H1 (cell line): ENCODE measurements at regions of chr19 and their contacts with region 1.

Region 1: GRCh38 chr19:50628146-50628545 is 11.5 kb downstream of the SYT3 start:
- DNase-seq: no peak
- H3K4me3 ChIP-seq: no peak overlapping the region
- H3K27ac ChIP-seq: no peak overlapping the region
- H3K4me1 ChIP-seq: 0 out of 7 replicates have a peak, but pooled peaks cover 0 to 4% (median 0%) of the 10 kb centered on the region in 4 experiments
- H3K27me3 ChIP-seq: no peaks in the 10 kb centered on the region
- CTCF ChIP-seq: peak in 1 of 3 experiments; percentile 8; a peak in 1 of 4 replicates
- EP300 ChIP-seq: no peak
- POLR2A ChIP-seq: no peak
- RAD21 ChIP-seq: no peak

Region 2: DNA sequence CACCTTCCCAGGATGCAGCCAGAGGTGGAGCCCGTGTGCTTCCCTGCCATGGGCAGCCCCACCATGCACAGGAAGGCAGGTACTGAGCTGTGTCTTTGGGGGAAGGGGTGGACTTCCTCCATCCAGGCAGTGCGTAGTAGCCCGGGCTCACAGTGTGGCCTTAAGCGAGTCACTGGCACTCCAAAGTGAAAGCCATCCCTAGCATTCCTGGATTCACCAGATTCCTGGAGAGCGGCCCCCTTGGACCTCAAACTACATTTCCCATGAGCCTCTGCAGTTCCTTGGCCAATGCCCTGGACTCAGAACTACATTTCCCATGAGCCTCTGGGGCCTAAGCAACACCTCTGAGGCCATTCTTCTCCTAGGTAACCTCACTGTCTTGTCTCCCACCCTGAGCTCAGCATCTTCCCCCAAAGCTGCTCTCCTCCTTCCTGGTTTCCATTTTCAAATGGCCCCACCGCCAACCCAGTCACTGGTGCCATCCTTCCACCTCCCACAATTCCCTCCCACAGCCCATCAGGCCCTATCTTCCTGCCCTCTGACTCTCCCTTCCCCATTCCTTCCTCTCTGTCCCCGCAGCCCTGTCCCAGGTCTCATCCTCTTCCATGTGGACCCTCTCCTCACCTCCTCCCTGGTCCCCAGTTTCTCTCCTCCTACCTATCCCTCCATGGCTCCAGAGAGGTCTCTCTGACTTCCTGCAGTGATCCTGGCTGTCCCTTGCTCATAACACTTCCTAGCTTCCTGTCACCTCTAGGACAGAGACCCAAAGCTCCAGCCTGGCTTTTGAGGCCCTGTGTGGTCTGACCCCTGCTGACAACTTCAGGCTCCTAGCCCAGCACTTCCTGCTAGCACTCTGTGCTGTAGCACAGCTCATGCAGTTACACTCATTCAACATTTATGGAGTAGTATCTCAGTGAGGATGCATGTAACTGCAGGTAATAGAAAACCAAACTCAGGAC is 21.6 kb after region 1 on chr19 and contains the start of gene C19orf81:
- CTCF ChIA-PET with region 1: interaction called, 11 read pairs
- POLR2A ChIA-PET with region 1: no interaction called
- DNase-seq: peak in 1 of 2 experiments; percentile 79
- H3K4me3 ChIP-seq: peak within 1 kb of the TSS; percentile 19 to 53 (median 34); a peak in 5 of 8 replicates
- H3K27ac ChIP-seq: no peak within 1 kb of the TSS
- H3K4me1 ChIP-seq: peaks cover 0 to 10% (median 5%) of the 10 kb centered on the region in 4 experiments; a peak in 6 of 7 replicates
- H3K27me3 ChIP-seq: peaks cover 0 to 15% (median 10%) of the 10 kb centered on the region in 4 experiments; a peak in 5 of 7 replicates
- CTCF ChIP-seq: peak in 2 of 3 experiments; percentile 2 to 30; a peak in 2 of 4 replicates
- EP300 ChIP-seq: no peak
- POLR2A ChIP-seq: no peak
- RAD21 ChIP-seq: no peak
- total RNA-seq, gene C19orf81: 11.7 and 14.2 TPM in 2 replicates